HepG2 (cell line): ENCODE measurements at regions of chr17 and their contacts with region 1.

Region 1: GRCh38 chr17:82315703-82316358 is 1.6 kb downstream of the CD7 start:
- DNase-seq: no peak
- ATAC-seq: peak; percentile 3; the same call in 1 of the 3 replicates
- H3K4me3 ChIP-seq: peak overlapping the region in 2 of 3 experiments; percentile 69 to 72; a peak in 3 of 6 replicates
- H3K27ac ChIP-seq: no peak overlapping the region
- H3K4me1 ChIP-seq: peaks cover 56% of the 10 kb centered on the region
- H3K27me3 ChIP-seq: no peaks in the 10 kb centered on the region; a peak in 1 of 5 replicates
- CTCF ChIP-seq: peak; percentile 53
- EP300 ChIP-seq: no peak
- POLR2A ChIP-seq: no peak
- RAD21 ChIP-seq: no peak

Region 2: GRCh38 chr17:82244413-82245140 is 71.3 kb before region 1 on chr17:
- CTCF ChIA-PET with region 1: interaction called, 13 read pairs
- POLR2A ChIA-PET with region 1: interaction called, 17 read pairs
- in situ Hi-C with region 1: loop called (anchors 5 kb)
- intact Hi-C with region 1: loop called (anchors 1 kb)
- DNase-seq: no peak
- ATAC-seq: no peak
- H3K4me3 ChIP-seq: no peak overlapping the region
- H3K27ac ChIP-seq: no peak overlapping the region
- H3K4me1 ChIP-seq: peaks cover 48% of the 10 kb centered on the region
- H3K27me3 ChIP-seq: no peaks in the 10 kb centered on the region
- CTCF ChIP-seq: peak; percentile 79
- EP300 ChIP-seq: no peak
- POLR2A ChIP-seq: no peak
- RAD21 ChIP-seq: peak; percentile 71

Region 3: DNA sequence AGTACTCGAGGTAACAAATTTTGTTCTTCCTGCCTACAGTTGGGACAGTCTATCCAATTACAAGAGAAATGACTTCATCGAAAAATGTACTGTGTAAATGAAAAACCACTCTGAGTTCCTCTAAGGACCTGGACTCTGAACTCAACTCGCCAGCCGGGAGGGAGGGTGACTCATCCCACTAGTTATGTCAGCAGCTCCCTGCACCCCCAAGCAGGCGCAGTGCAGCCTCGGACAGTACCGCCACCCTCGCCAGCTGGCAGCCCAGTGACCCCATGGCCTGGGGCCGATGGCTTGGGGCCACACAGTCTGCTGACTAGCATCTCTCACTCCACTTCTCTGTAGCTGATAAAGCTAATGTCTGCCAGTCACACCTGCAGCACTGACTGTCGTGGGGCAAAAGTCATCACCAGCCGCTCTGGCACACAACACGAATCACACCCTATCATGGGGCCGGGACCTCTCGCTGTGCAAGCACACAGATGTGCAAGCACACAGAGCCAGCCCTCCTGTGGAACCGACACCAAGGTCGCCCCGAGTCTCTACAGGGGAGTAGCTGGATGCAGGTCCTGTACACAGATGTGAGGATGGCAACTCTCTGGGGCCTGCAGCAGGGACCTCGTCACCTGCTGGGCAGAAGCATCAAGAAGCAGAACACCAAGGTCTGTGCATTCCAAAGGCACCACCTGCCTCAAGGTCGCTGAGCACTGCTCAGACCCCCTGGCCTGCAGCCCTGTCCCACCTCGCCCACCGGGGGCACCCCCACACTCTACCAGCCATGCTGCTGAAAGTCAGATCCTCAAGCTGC is 48.1 kb before region 1 on chr17:
- CTCF ChIA-PET with region 1: no interaction called
- POLR2A ChIA-PET with region 1: interaction called, 9 read pairs
- in situ Hi-C with region 1: no loop called
- intact Hi-C with region 1: loop called (anchors 1 kb)
- DNase-seq: peak; percentile 99
- ATAC-seq: peak; percentile 88
- H3K4me3 ChIP-seq: peak overlapping the region; percentile 12 to 65 (median 48); a peak in 5 of 6 replicates
- H3K27ac ChIP-seq: peak overlapping the region; percentile 90
- H3K4me1 ChIP-seq: peaks cover 70% of the 10 kb centered on the region
- H3K27me3 ChIP-seq: no peaks in the 10 kb centered on the region; a peak in 1 of 5 replicates
- CTCF ChIP-seq: peak; percentile 46
- EP300 ChIP-seq: peak; percentile 84 to 90
- POLR2A ChIP-seq: peak in 1 of 2 experiments; percentile 44; a peak in 3 of 4 replicates
- RAD21 ChIP-seq: peak; percentile 44

Region 4: GRCh38 chr17:82302991-82303943 is 12.6 kb before region 1 on chr17:
- CTCF ChIA-PET with region 1: interaction called, 26 read pairs
- POLR2A ChIA-PET with region 1: interaction called, 270 read pairs
- in situ Hi-C with region 1: no loop called
- intact Hi-C with region 1: loop called (anchors 2 kb)
- DNase-seq: no peak
- ATAC-seq: peak; percentile 35
- H3K4me3 ChIP-seq: peak overlapping the region in 2 of 3 experiments; percentile 42 to 59; a peak in 3 of 6 replicates
- H3K27ac ChIP-seq: no peak overlapping the region
- H3K4me1 ChIP-seq: peaks cover 78% of the 10 kb centered on the region
- H3K27me3 ChIP-seq: no peaks in the 10 kb centered on the region
- CTCF ChIP-seq: no peak
- EP300 ChIP-seq: 0 out of 4 replicates have a peak, but pooled peaks of 1 of the 2 experiments have one; percentile 7
- POLR2A ChIP-seq: no peak
- RAD21 ChIP-seq: 0 out of 2 replicates have a peak, but pooled peaks have one; percentile 20

Region 5: DNA sequence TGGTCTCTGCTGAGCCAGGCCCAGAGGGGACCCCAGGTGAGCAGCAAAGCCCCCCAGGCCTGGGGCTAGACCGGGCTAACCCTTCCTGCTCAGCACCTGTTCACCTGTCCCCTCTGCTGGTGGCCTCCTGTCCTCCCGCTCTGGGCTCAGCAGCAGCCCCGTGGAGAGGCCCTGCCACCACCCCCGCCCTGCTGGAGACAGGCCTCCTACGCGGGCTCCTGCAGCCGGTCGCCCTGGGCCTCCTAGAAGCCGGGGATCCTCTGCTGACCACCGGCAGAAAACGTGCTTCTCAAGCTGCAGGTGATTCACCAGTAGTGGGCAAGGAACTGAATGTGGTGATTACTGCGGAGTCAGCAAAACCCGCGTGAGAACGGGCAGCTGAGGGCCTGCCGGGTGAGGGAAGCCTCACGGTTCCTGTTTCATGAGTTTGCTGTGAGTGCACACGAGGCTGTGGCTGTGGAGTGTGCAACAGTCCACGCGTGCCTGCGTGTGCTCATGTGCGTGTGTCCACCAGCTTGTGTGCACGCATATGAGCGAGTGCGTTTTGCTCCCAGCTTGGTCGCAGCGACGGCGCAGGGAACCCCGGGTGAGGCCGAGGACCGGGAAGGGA is 16.9 kb after region 1 on chr17:
- CTCF ChIA-PET with region 1: no interaction called
- POLR2A ChIA-PET with region 1: interaction called, 39 read pairs
- in situ Hi-C with region 1: no loop called
- intact Hi-C with region 1: no loop called
- DNase-seq: no peak
- ATAC-seq: peak; percentile 15
- H3K4me3 ChIP-seq: peak overlapping the region in 2 of 3 experiments; percentile 31 to 35; a peak in 4 of 6 replicates
- H3K27ac ChIP-seq: peak overlapping the region; percentile 9
- H3K4me1 ChIP-seq: peaks cover 90% of the 10 kb centered on the region
- H3K27me3 ChIP-seq: no peaks in the 10 kb centered on the region
- CTCF ChIP-seq: peak; percentile 43
- EP300 ChIP-seq: no peak
- POLR2A ChIP-seq: no peak
- RAD21 ChIP-seq: peak; percentile 42; the same call in 1 of the 2 replicates

Region 6: DNA sequence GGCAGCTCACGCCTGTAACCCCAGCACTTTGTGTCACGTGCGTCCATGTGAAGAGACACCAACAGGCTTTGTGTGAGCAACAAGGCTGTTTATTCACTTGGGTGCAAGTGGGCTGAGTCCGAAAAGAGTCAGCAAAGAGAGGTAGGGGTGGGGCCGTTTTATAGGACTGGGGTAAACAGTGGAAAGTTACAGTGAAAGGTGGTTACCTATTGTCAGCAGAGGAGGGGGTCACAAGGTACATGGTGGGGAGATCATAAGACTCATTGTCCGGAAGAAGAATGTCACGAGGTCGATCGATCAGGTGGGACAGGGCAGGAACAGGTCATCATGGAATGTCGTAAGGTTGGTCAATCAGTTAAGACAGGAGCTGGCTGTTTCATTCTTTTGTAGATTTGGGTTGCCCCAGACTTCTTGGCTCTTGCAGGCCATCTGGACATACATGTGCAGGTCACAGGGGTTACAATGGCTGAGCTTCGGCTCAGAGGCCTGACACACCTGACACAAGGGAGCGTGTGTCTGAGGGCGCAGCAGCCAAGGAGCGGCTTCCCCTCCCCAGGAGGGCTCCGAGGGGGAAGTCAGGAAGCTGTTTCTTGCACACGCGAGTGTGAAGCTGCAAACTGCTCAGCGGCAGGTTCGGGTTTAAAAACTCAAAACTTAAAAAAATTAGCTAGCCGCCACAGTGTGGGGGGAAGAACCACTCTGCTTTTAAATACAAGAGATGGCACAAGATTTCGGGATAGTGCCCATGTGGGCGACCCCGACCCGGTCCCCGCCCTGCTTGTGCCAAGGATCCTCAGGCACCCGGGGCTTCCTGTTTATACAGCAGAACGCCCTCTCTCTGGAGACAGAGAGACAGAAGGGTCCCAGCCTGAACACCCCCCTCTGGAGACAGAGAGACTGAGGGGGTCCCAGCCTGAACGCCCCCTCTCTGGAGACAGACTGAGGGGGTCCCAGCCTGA is 30.8 kb after region 1 on chr17:
- CTCF ChIA-PET with region 1: no interaction called
- POLR2A ChIA-PET with region 1: interaction called, 12 read pairs
- in situ Hi-C with region 1: no loop called
- intact Hi-C with region 1: no loop called
- DNase-seq: peak; percentile 100
- ATAC-seq: peak; percentile 24
- H3K4me3 ChIP-seq: no peak overlapping the region; a peak in 1 of 6 replicates
- H3K27ac ChIP-seq: peak overlapping the region; percentile 83
- H3K4me1 ChIP-seq: peaks cover 94% of the 10 kb centered on the region
- H3K27me3 ChIP-seq: no peaks in the 10 kb centered on the region
- CTCF ChIP-seq: peak; percentile 20; the same call in 1 of the 2 replicates
- EP300 ChIP-seq: peak; percentile 90 to 98
- POLR2A ChIP-seq: peak; percentile 52 to 78; a peak in 3 of 4 replicates
- RAD21 ChIP-seq: peak; percentile 68